WTC11 (cell line): ENCODE measurements at regions of chr22 and their contacts with region 1.

Region 1: DNA sequence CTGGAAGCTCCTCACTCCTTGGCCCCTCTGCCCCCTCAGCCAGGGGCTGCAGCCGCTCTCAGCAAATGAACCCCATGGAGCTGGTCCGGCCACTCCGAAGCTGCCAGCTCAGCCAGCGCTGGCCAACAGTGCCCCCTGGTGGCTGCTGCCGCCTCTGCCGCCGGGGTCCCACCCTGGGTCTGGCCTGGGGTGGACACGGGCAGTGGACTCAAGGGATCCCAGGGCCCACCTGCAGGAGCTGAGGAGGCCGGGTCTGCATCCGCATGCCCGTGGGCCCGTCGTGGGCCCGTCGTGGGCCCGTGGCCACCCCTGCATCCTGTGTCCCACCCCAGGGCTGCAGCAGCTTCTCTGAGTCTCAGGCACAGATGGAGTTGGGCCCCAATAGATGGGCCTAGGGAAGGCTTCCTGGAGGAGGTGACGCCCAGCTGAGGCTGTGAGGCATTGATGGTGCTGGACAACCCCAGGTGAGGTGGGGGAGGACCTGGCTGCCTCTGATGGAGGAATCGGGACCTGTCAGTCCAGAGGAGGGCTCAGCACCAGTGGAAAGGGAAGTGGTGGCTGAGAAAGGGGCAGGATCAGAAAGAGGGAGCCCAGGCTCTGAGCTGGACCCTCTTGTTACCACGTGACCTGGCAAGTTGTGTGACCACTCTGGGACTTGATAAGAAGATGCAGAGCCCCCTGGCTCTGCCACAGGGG is 522.3 kb downstream of the BRD1 start:
- DNase-seq: peak; percentile 94
- ATAC-seq: peak; percentile 91
- H3K4me3 Mint-ChIP-seq: no peak overlapping the region
- H3K27ac Mint-ChIP-seq: no peak overlapping the region
- H3K4me1 Mint-ChIP-seq: no peaks in the 10 kb centered on the region
- H3K27me3 Mint-ChIP-seq: no peaks in the 10 kb centered on the region; the same call in 1 of the 2 replicates
- CTCF ChIP-seq: peak; percentile 96

Region 2: DNA sequence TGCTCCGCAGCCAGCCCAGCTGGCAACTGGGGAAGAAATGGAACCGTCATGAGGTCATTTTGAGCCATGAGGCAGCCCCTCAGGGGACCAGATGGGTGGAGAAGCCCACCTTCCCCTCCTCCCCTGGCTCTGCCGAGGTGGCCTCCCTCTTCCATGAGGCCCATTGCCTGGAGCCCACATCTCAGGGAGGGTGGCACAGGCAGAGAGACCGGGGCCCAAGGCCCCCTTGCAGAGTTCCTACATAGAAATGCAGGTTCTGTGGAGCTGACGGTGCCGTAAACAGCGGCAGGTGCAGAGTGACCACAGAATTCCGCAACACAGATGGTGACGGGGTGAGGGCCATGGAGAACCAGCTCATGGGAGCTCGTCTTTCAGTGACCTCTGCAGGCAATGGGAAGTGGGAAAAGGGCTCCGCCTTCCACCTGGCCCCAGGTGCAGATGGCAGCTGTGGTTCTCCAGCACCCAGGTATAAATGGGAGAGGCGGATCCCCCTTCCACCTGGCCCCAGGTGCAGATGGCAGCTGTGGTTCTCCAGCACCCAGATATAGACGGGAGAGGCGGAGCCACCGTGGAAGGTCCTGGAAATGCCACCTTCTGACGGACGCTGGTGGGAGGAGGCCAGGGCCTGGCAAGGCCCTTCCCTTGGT is 243.1 kb before region 1 on chr22:
- CTCF ChIA-PET with region 1: interaction called, 10 read pairs
- POLR2A ChIA-PET with region 1: no interaction called
- DNase-seq: no peak
- ATAC-seq: peak; percentile 43
- H3K4me3 Mint-ChIP-seq: 0 out of 2 replicates have a peak overlapping the region, but pooled peaks have one; percentile 0
- H3K27ac Mint-ChIP-seq: peak overlapping the region; percentile 48
- H3K4me1 Mint-ChIP-seq: peaks cover 49% of the 10 kb centered on the region
- H3K27me3 Mint-ChIP-seq: peaks cover 3% of the 10 kb centered on the region; the same call in 1 of the 2 replicates
- CTCF ChIP-seq: no peak

Region 3: GRCh38 chr22:49197505-49197904 is 107.9 kb before region 1 on chr22:
- CTCF ChIA-PET with region 1: interaction called, 12 read pairs
- POLR2A ChIA-PET with region 1: no interaction called
- DNase-seq: peak; percentile 45
- ATAC-seq: peak; percentile 79
- H3K4me3 Mint-ChIP-seq: no peak overlapping the region
- H3K27ac Mint-ChIP-seq: no peak overlapping the region
- H3K4me1 Mint-ChIP-seq: peaks cover 19% of the 10 kb centered on the region
- H3K27me3 Mint-ChIP-seq: no peaks in the 10 kb centered on the region
- CTCF ChIP-seq: no peak

Region 4: GRCh38 chr22:49240472-49240871 is 64.9 kb before region 1 on chr22:
- CTCF ChIA-PET with region 1: interaction called, 10 read pairs
- POLR2A ChIA-PET with region 1: no interaction called
- DNase-seq: no peak
- ATAC-seq: no peak
- H3K4me3 Mint-ChIP-seq: no peak overlapping the region
- H3K27ac Mint-ChIP-seq: no peak overlapping the region
- H3K4me1 Mint-ChIP-seq: peaks cover 8% of the 10 kb centered on the region
- H3K27me3 Mint-ChIP-seq: no peaks in the 10 kb centered on the region; the same call in 1 of the 2 replicates
- CTCF ChIP-seq: no peak

Region 5: GRCh38 chr22:49632199-49633009 is 327.0 kb after region 1 on chr22:
- CTCF ChIA-PET with region 1: interaction called, 23 read pairs
- POLR2A ChIA-PET with region 1: no interaction called
- DNase-seq: peak; percentile 82
- ATAC-seq: peak; percentile 85
- H3K4me3 Mint-ChIP-seq: peak overlapping the region; percentile 59
- H3K27ac Mint-ChIP-seq: no peak overlapping the region
- H3K4me1 Mint-ChIP-seq: peaks cover 4% of the 10 kb centered on the region; the same call in 1 of the 2 replicates
- H3K27me3 Mint-ChIP-seq: no peaks in the 10 kb centered on the region; the same call in 1 of the 2 replicates
- CTCF ChIP-seq: peak; percentile 62; the same call in 1 of the 2 replicates